Common myeloid progenitor, CD34-positive (primary cell): ENCODE measurements at regions of chr12 and their contacts with region 1.

Region 1: GRCh38 chr12:122946690-122947341 is 19.4 kb downstream of the ABCB9 start:
- DNase-seq: peak; percentile 98 to 99 (median 99)
- H3K4me3 ChIP-seq: peak overlapping the region in 3 of 7 experiments; percentile 2 to 38 (median 37)
- H3K27ac ChIP-seq: peak overlapping the region; percentile 72 to 82
- H3K4me1 ChIP-seq: peaks cover 0 to 36% (median 34%) of the 10 kb centered on the region in 4 experiments
- H3K27me3 ChIP-seq: no peaks in the 10 kb centered on the region

Region 2: GRCh38 chr12:122929812-122930211 is 17.0 kb before region 1 on chr12:
- CTCF ChIA-PET with region 1: interaction called, 21 read pairs
- POLR2A ChIA-PET with region 1: no interaction called
- DNase-seq: no peak
- H3K4me3 ChIP-seq: no peak overlapping the region
- H3K27ac ChIP-seq: no peak overlapping the region
- H3K4me1 ChIP-seq: peaks cover 7 to 14% (median 10%) of the 10 kb centered on the region in 4 experiments
- H3K27me3 ChIP-seq: no peaks in the 10 kb centered on the region